ENCODE measurements at regions of chr12 and their contacts with region 1.

Region 1: DNA sequence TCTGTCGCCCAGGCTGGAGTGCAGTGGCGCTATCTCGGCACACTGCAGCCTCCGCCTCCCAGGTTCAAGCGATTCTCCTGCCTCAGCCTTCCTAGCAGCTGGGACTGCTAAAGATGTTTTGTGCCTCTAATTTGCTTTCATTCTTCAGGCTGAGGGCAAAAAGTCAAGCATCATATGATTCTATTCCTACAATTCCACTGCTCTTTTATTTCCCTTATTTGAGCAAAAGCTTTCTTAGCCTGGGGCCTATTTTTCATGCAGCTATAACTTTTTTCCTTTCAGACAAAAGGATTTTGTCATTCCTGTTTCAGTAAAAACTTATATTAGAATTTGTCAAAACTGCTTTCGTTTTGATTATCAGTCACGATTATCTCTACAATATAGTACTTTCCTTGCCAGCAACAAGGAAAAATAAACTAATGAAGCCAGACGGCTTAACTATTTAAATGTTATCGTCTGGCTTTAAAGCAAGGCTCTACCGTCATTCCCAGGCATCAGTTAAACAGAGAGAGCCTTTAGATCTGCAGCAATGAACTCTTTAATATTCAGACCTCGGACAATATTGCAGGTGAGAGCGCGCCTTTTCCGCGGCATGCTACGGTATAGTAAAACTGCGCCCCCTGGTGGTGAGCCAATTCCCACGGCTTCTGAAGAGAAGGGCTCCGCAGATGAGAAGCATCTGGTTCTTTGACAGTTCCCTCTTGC is 1.4 kb upstream of the SLC2A13 start:
- DNase-seq: peak; percentile 64
- H3K4me3 ChIP-seq: peak overlapping the region; percentile 34
- H3K27ac ChIP-seq: no peak overlapping the region
- H3K27me3 ChIP-seq: no peaks in the 10 kb centered on the region
- CTCF ChIP-seq: peak; percentile 96

Region 2: GRCh38 chr12:39764944-39765560 is 342.2 kb before region 1 on chr12:
- CTCF ChIA-PET with region 1: interaction called, 30 read pairs
- POLR2A ChIA-PET with region 1: no interaction called
- DNase-seq: peak; percentile 7
- H3K4me3 ChIP-seq: no peak overlapping the region
- H3K27ac ChIP-seq: no peak overlapping the region
- H3K27me3 ChIP-seq: no peaks in the 10 kb centered on the region
- CTCF ChIP-seq: peak; percentile 75

Region 3: GRCh38 chr12:39972119-39972518 is 135.1 kb before region 1 on chr12:
- CTCF ChIA-PET with region 1: no interaction called
- POLR2A ChIA-PET with region 1: no interaction called
- DNase-seq: no peak
- H3K4me3 ChIP-seq: no peak overlapping the region
- H3K27ac ChIP-seq: no peak overlapping the region
- H3K27me3 ChIP-seq: no peaks in the 10 kb centered on the region
- CTCF ChIP-seq: no peak

Region 4: GRCh38 chr12:39990122-39991101 is 116.8 kb before region 1 on chr12:
- CTCF ChIA-PET with region 1: interaction called, 11 read pairs
- POLR2A ChIA-PET with region 1: no interaction called
- DNase-seq: peak; percentile 2
- H3K4me3 ChIP-seq: no peak overlapping the region
- H3K27ac ChIP-seq: no peak overlapping the region
- H3K27me3 ChIP-seq: no peaks in the 10 kb centered on the region
- CTCF ChIP-seq: peak; percentile 85

Region 5: GRCh38 chr12:40086471-40086870 is 20.8 kb before region 1 on chr12:
- CTCF ChIA-PET with region 1: interaction called, 10 read pairs
- POLR2A ChIA-PET with region 1: no interaction called
- DNase-seq: no peak
- H3K4me3 ChIP-seq: no peak overlapping the region
- H3K27ac ChIP-seq: no peak overlapping the region
- H3K27me3 ChIP-seq: no peaks in the 10 kb centered on the region
- CTCF ChIP-seq: no peak

Region 6: GRCh38 chr12:40117818-40118217 is 10.6 kb after region 1 on chr12:
- CTCF ChIA-PET with region 1: interaction called, 40 read pairs
- POLR2A ChIA-PET with region 1: no interaction called
- DNase-seq: no peak
- H3K4me3 ChIP-seq: no peak overlapping the region
- H3K27ac ChIP-seq: no peak overlapping the region
- H3K27me3 ChIP-seq: no peaks in the 10 kb centered on the region
- CTCF ChIP-seq: no peak

Region 7: GRCh38 chr12:40123486-40123885 is 16.2 kb after region 1 on chr12:
- CTCF ChIA-PET with region 1: interaction called, 40 read pairs
- POLR2A ChIA-PET with region 1: no interaction called
- DNase-seq: no peak
- H3K4me3 ChIP-seq: no peak overlapping the region
- H3K27ac ChIP-seq: no peak overlapping the region
- H3K27me3 ChIP-seq: no peaks in the 10 kb centered on the region
- CTCF ChIP-seq: no peak